SK-N-SH (cell line): ENCODE measurements at regions of chr9 and their contacts with region 1.

Region 1: GRCh38 chr9:136283291-136284235 is 20.3 kb downstream of the CCDC187 start:
- DNase-seq: peak; percentile 94
- H3K4me3 ChIP-seq: peak overlapping the region in 1 of 2 experiments; percentile 43; a peak in 1 of 4 replicates
- H3K27ac ChIP-seq: no peak overlapping the region
- H3K4me1 ChIP-seq: peaks cover 0 to 11% of the 10 kb centered on the region in 2 experiments; a peak in 2 of 4 replicates
- H3K27me3 ChIP-seq: peaks cover 41% of the 10 kb centered on the region
- CTCF ChIP-seq: peak; percentile 83
- EP300 ChIP-seq: no peak
- RAD21 ChIP-seq: peak; percentile 85

Region 2: DNA sequence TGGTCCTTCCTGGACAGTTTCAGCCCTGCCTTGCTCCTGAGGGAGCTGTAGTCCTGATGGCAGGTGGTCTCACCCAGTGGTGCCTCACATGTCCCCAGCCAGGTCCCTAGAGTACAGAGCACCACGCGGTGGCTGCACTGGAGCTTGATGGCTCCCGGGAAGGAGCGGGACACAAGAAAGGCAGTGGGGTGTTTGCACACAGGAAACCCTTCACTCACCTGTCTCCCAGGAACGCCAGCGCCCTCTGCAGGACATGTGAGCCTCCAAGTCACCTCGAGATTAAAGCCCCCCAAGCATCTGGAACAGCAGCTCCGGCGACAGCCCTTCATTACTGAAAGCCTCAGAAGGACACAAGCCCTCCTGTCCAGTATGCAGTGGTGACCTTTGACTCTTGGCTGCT is 145.0 kb before region 1 on chr9:
- CTCF ChIA-PET with region 1: interaction called, 16 read pairs
- POLR2A ChIA-PET with region 1: no interaction called
- DNase-seq: peak; percentile 69
- H3K4me3 ChIP-seq: no peak overlapping the region
- H3K27ac ChIP-seq: no peak overlapping the region
- H3K4me1 ChIP-seq: peaks cover 2 to 11% of the 10 kb centered on the region in 2 experiments; a peak in 2 of 4 replicates
- H3K27me3 ChIP-seq: peaks cover 50% of the 10 kb centered on the region
- CTCF ChIP-seq: peak; percentile 56
- EP300 ChIP-seq: no peak
- RAD21 ChIP-seq: peak; percentile 23; the same call in 1 of the 2 replicates

Region 3: DNA sequence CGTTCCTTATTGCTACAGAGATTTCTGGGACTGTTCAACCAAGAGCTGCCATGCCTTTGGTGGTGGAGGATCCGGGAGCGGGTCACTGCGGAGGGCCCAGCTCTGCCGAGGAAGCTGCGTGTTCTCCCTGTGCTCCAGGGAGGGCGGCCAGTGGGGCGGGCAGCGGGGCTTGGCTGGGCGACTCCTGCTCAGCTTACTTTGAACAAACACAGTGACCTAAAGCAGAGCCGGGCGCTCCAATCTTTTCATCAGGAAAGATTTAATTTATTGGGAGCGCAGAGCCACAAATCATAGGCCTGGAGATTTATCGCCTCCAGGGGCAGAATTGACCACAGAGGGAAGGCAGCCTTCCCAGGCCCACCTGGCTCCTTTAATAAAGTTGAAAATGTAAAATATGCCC is 106.3 kb before region 1 on chr9:
- CTCF ChIA-PET with region 1: interaction called, 59 read pairs
- POLR2A ChIA-PET with region 1: no interaction called
- DNase-seq: peak; percentile 91
- H3K4me3 ChIP-seq: no peak overlapping the region
- H3K27ac ChIP-seq: no peak overlapping the region
- H3K4me1 ChIP-seq: peaks cover 0 to 12% of the 10 kb centered on the region in 2 experiments; a peak in 1 of 4 replicates
- H3K27me3 ChIP-seq: peaks cover 73% of the 10 kb centered on the region
- CTCF ChIP-seq: no peak
- EP300 ChIP-seq: peak in 1 of 2 experiments; percentile 75; a peak in 2 of 4 replicates
- RAD21 ChIP-seq: no peak

Region 4: GRCh38 chr9:136201609-136202453 is 81.7 kb before region 1 on chr9:
- CTCF ChIA-PET with region 1: interaction called, 10 read pairs
- POLR2A ChIA-PET with region 1: no interaction called
- DNase-seq: peak; percentile 63
- H3K4me3 ChIP-seq: no peak overlapping the region
- H3K27ac ChIP-seq: no peak overlapping the region
- H3K4me1 ChIP-seq: peaks cover 0 to 5% of the 10 kb centered on the region in 2 experiments; a peak in 1 of 4 replicates
- H3K27me3 ChIP-seq: peaks cover 66% of the 10 kb centered on the region
- CTCF ChIP-seq: no peak
- EP300 ChIP-seq: no peak
- RAD21 ChIP-seq: no peak

Region 5: GRCh38 chr9:136267261-136268111 is 16.1 kb before region 1 on chr9:
- CTCF ChIA-PET with region 1: interaction called, 51 read pairs
- POLR2A ChIA-PET with region 1: interaction called, 4 read pairs
- DNase-seq: peak; percentile 100
- H3K4me3 ChIP-seq: peak overlapping the region; percentile 50 to 52
- H3K27ac ChIP-seq: peak overlapping the region in 1 of 2 experiments; percentile 76; a peak in 2 of 4 replicates
- H3K4me1 ChIP-seq: peaks cover 0 to 15% of the 10 kb centered on the region in 2 experiments; a peak in 1 of 4 replicates
- H3K27me3 ChIP-seq: peaks cover 5% of the 10 kb centered on the region; the same call in 1 of the 2 replicates
- CTCF ChIP-seq: peak; percentile 28; the same call in 1 of the 2 replicates
- EP300 ChIP-seq: no peak
- RAD21 ChIP-seq: peak; percentile 49

Region 6: DNA sequence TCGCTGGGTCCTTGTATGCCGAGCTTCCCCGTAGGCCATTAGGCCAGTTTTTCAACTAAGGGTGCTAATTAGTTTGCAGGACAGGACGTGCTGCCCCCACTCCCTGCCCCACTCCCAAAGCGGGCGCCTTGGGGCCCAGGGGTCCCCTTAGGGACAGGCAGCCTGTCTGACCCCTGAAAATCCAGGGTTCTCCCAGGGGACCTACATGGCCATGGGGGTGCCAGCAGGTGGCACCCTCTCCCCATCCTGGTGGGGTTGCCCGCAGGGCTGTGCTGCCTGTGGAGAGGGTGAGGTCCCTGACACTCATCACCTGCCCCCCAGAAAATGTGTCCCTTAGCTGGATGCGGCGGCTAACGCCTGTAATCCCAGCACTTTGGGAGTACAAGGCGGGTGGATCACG is 28.9 kb after region 1 on chr9:
- CTCF ChIA-PET with region 1: interaction called, 11 read pairs
- POLR2A ChIA-PET with region 1: no interaction called
- DNase-seq: peak; percentile 92
- H3K4me3 ChIP-seq: no peak overlapping the region
- H3K27ac ChIP-seq: no peak overlapping the region
- H3K4me1 ChIP-seq: no peaks in the 10 kb centered on the region; a peak in 1 of 4 replicates
- H3K27me3 ChIP-seq: no peaks in the 10 kb centered on the region
- CTCF ChIP-seq: peak; percentile 68
- EP300 ChIP-seq: no peak
- RAD21 ChIP-seq: peak; percentile 85